Activated B cell treated with CpG ODN at 0.5 μM for 24 hours (primary cell): ENCODE measurements at regions of chr11 and their contacts with region 1.

Region 1: GRCh38 chr11:59053387-59053786 is 32.7 kb upstream of the GLYATL1B start:
- DNase-seq: peak; percentile 45
- ATAC-seq: no peak
- H3K4me3 Mint-ChIP-seq: no peak overlapping the region
- H3K27ac Mint-ChIP-seq: peak overlapping the region; percentile 66
- H3K4me1 Mint-ChIP-seq: peaks cover 73% of the 10 kb centered on the region
- H3K27me3 Mint-ChIP-seq: no peaks in the 10 kb centered on the region
- CTCF ChIP-seq: no peak

Region 2: DNA sequence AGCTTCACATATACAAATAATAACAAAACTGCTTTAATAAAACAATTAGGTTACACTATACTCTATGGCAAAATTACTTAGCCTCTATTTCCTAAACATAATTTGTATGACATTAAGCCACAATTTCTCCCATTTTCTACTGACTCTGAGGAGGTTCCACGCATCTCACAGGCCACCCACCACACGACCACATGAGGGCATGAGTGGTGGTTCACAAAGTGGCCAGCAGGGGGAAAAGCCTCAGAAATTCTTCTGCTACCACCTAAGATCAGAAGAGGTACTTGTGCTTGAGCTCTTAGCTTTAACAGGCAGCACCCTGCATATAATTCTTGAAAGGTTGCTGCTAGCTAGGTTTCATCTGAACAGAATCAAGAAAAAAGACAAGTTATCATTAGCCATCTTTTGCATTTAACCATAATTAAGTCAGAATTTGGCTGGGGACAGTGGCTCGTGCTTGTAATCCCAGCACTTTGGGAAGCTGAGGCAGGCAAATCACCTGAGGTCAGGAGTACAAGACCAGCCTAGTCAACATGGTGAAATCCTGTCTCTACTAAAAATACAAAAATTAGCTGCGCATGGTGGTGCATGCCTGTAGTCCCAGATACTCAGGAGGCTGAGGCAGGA is 485.4 kb before region 1 on chr11:
- CTCF ChIA-PET with region 1: no interaction called
- POLR2A ChIA-PET with region 1: interaction called, 3 read pairs
- intact Hi-C with region 1: loop called (anchors 2 kb)
- DNase-seq: peak; percentile 54
- ATAC-seq: peak; percentile 99
- H3K4me3 Mint-ChIP-seq: no peak overlapping the region
- H3K27ac Mint-ChIP-seq: peak overlapping the region; percentile 36
- H3K4me1 Mint-ChIP-seq: peaks cover 40% of the 10 kb centered on the region
- H3K27me3 Mint-ChIP-seq: no peaks in the 10 kb centered on the region
- CTCF ChIP-seq: peak; percentile 53

Region 3: DNA sequence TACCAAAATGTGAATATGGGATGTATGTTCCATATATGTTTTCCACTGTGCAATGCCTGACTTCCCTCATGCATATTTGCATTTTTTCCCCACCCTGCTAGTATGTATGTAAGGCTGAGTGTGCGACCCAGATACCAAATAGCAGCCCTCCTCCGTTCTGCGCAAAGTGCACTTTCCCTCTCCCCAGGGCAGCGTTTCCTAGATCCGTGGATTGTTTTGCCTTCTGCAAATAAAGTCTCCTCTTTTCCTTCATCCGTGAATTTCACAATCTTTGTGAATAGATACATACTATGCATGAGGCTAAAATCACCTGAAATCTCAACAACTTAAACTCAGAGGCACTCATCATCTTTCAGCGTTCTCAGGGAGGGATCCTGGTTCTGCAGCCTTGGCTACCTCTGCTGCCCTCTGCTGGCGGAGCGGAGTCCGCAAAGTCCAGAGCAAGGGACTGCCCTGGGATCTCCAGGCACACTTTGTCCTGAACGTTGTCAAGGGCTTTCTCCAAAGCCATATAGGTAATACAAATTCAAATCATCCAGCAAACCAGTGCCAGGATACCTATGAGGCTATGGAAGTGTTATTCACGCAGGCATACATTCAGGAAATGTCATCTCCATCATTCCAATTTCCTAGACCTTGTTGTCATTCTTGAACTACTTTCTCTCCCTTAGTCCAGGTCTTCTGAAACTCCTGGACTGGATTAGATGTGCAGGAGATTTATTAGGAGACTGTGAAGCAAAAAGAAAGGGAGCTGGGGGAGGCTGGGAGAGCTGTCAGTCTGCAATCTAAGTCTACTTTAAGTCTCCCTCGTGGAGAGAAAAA is 377.8 kb before region 1 on chr11:
- CTCF ChIA-PET with region 1: interaction called, 8 read pairs
- POLR2A ChIA-PET with region 1: no interaction called
- intact Hi-C with region 1: loop called (anchors 1 kb)
- DNase-seq: peak; percentile 67
- ATAC-seq: peak; percentile 80
- H3K4me3 Mint-ChIP-seq: no peak overlapping the region
- H3K27ac Mint-ChIP-seq: no peak overlapping the region
- H3K4me1 Mint-ChIP-seq: no peaks in the 10 kb centered on the region
- H3K27me3 Mint-ChIP-seq: peaks cover 3% of the 10 kb centered on the region
- CTCF ChIP-seq: peak; percentile 59

Region 4: GRCh38 chr11:58958500-58958899 is 94.9 kb before region 1 on chr11:
- CTCF ChIA-PET with region 1: interaction called, 49 read pairs
- POLR2A ChIA-PET with region 1: interaction called, 4 read pairs
- intact Hi-C with region 1: loop called (anchors 1 kb)
- DNase-seq: peak; percentile 42
- ATAC-seq: peak; percentile 82
- H3K4me3 Mint-ChIP-seq: no peak overlapping the region
- H3K27ac Mint-ChIP-seq: no peak overlapping the region
- H3K4me1 Mint-ChIP-seq: peaks cover 2% of the 10 kb centered on the region
- H3K27me3 Mint-ChIP-seq: no peaks in the 10 kb centered on the region
- CTCF ChIP-seq: no peak

Region 5: DNA sequence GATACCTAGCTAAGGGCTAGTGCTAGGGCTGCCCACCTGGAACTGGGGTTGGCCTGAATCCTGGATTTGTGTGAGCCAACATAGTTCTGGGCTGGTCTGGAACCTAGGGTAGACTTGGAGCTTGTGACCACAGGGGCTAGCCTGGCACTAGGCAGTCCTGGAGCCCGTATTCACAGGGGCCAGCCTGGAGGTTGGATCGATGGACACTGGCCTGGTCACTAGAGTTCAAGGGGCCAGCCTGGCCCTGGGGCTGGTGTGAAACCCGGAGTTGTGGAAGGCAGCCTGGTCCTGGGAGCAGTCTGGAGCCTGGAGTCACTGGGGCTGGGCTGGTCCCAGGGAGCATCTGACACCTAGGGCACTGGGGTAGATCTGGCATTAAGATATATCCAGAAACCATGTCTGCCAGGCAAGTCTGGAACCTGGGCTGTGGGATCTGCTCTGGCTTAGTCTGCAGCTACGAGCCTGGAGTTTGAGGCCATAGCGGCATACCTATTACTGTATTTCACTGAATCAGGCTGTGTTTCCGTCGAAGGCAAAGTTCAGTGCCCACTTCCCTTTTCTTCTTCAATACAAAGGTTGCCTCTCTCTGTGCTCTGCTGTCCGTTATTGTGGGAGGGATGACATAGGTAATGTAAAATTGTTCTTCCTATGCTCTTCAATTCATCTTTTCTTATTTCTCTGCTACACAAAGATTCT is 23.6 kb after region 1 on chr11:
- CTCF ChIA-PET with region 1: interaction called, 10 read pairs
- POLR2A ChIA-PET with region 1: interaction called, 14 read pairs
- intact Hi-C with region 1: loop called (anchors 2 kb)
- DNase-seq: no peak
- ATAC-seq: peak; percentile 95
- H3K4me3 Mint-ChIP-seq: peak overlapping the region; percentile 56
- H3K27ac Mint-ChIP-seq: peak overlapping the region; percentile 78
- H3K4me1 Mint-ChIP-seq: peaks cover 59% of the 10 kb centered on the region
- H3K27me3 Mint-ChIP-seq: no peaks in the 10 kb centered on the region
- CTCF ChIP-seq: no peak

Region 6: GRCh38 chr11:59106363-59107336 is 53.3 kb after region 1 on chr11 and contains the start of gene FAM111B:
- CTCF ChIA-PET with region 1: interaction called, 19 read pairs
- POLR2A ChIA-PET with region 1: interaction called, 16 read pairs
- intact Hi-C with region 1: loop called (anchors 1 kb)
- DNase-seq: peak; percentile 43
- ATAC-seq: peak; percentile 33
- H3K4me3 Mint-ChIP-seq: peak within 1 kb of the TSS; percentile 94
- H3K27ac Mint-ChIP-seq: peak within 1 kb of the TSS; percentile 84
- H3K4me1 Mint-ChIP-seq: peaks cover 84% of the 10 kb centered on the region
- H3K27me3 Mint-ChIP-seq: no peaks in the 10 kb centered on the region
- CTCF ChIP-seq: no peak
- total RNA-seq, gene FAM111B: 48.0 and 49.1 TPM in 2 replicates

Region 7: DNA sequence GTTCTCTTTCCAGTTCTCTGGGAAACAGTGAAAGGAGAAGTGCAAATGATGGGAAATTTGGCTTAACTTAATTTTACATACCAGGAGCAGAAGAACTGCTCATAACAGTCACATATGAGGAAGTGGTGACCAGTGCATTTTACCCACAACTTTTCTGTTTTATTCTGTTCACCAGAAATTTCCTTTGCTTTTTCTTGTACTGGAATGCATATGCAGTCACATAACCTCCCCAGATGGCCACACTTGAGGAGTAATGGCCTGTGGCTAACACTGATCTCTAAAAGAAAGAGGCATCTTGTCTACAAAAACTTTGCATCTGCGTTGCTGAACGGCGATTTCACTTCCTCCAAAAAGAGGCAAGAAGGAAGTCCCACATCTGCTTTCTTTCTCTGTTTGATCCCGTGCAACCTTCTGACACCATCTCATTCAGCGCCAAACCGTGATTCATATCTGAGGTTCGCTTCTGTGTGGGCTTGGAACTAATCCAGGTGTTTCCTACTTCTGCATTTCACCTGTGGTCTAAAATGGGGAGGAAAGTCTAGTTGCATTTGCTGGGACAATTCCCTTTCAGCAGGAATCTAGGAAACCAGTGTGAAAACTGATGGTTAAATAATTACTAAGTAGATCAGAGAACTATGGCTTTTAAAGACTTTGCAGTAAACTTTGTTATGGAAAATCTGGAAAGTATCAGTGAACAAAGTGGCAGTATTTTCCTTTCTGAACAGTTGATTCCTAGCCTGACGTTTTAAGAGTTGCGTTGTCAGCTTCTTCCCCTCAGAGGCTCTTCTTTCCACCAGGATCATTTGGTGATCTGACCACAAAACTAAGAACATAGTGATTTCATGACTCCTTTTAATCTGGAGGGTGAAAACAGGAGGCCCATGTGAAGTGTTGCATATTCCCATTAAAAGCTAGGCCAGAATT is 163.5 kb after region 1 on chr11:
- CTCF ChIA-PET with region 1: no interaction called
- POLR2A ChIA-PET with region 1: interaction called, 3 read pairs
- intact Hi-C with region 1: loop called (anchors 2 kb)
- DNase-seq: peak; percentile 35
- ATAC-seq: peak; percentile 69
- H3K4me3 Mint-ChIP-seq: peak overlapping the region; percentile 52
- H3K27ac Mint-ChIP-seq: peak overlapping the region; percentile 91
- H3K4me1 Mint-ChIP-seq: peaks cover 100% of the 10 kb centered on the region
- H3K27me3 Mint-ChIP-seq: no peaks in the 10 kb centered on the region
- CTCF ChIP-seq: no peak